ENCODE measurements at regions of chr21 and their contacts with region 1.

Region 1: DNA sequence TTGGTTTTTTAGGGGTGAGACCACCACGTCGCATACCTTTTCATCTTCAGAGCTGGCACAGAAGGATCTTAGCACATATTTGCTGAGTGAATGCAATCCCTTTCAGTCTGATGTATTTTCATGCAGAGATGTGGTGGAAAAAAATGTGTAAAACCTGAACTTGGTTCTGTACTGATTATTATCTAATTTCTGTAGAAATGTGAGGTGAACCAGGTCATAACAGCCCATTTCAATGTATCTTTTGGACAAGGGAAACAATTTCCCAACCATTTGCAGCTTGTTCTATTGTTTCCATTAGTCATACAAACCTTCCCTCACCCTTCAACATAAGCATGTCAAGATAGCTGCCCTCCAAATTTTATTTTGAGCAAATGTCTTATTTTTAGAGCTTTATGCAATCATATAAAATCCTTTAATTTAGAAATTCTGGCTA is 46.8 kb upstream of the RUNX1 start:
- DNase-seq: peak; percentile 20
- ATAC-seq: peak; percentile 25
- H3K4me3 Mint-ChIP-seq: no peak overlapping the region
- H3K27ac Mint-ChIP-seq: peak overlapping the region; percentile 86
- H3K4me1 Mint-ChIP-seq: peaks cover 50% of the 10 kb centered on the region
- H3K27me3 Mint-ChIP-seq: peaks cover 2% of the 10 kb centered on the region

Region 2: GRCh38 chr21:34946916-34947534 is 148.8 kb before region 1 on chr21:
- CTCF ChIA-PET with region 1: no interaction called
- POLR2A ChIA-PET with region 1: no interaction called
- intact Hi-C with region 1: loop called in 1 of 2 experiments (anchors 2 kb)
- DNase-seq: no peak
- ATAC-seq: peak; percentile 65
- H3K4me3 Mint-ChIP-seq: peak overlapping the region; percentile 13
- H3K27ac Mint-ChIP-seq: peak overlapping the region; percentile 95
- H3K4me1 Mint-ChIP-seq: peaks cover 92% of the 10 kb centered on the region
- H3K27me3 Mint-ChIP-seq: no peaks in the 10 kb centered on the region

Region 3: GRCh38 chr21:35026617-35027562 is 69.0 kb before region 1 on chr21:
- CTCF ChIA-PET with region 1: no interaction called
- POLR2A ChIA-PET with region 1: no interaction called
- intact Hi-C with region 1: loop called in 1 of 2 experiments (anchors 2 kb)
- DNase-seq: peak; percentile 92
- ATAC-seq: peak; percentile 68
- H3K4me3 Mint-ChIP-seq: peak overlapping the region; percentile 75
- H3K27ac Mint-ChIP-seq: peak overlapping the region; percentile 97
- H3K4me1 Mint-ChIP-seq: peaks cover 88% of the 10 kb centered on the region
- H3K27me3 Mint-ChIP-seq: no peaks in the 10 kb centered on the region

Region 4: GRCh38 chr21:35138665-35139381 is 42.9 kb after region 1 on chr21:
- CTCF ChIA-PET with region 1: no interaction called
- POLR2A ChIA-PET with region 1: interaction called, 10 read pairs
- intact Hi-C with region 1: loop called (anchors 1 kb)
- DNase-seq: peak; percentile 83
- ATAC-seq: peak; percentile 91
- H3K4me3 Mint-ChIP-seq: peak overlapping the region; percentile 65
- H3K27ac Mint-ChIP-seq: peak overlapping the region; percentile 93
- H3K4me1 Mint-ChIP-seq: peaks cover 38% of the 10 kb centered on the region
- H3K27me3 Mint-ChIP-seq: no peaks in the 10 kb centered on the region

Region 5: GRCh38 chr21:35189077-35189863 is 93.4 kb after region 1 on chr21:
- CTCF ChIA-PET with region 1: no interaction called
- POLR2A ChIA-PET with region 1: no interaction called
- intact Hi-C with region 1: no loop called
- DNase-seq: no peak
- ATAC-seq: no peak
- H3K4me3 Mint-ChIP-seq: no peak overlapping the region
- H3K27ac Mint-ChIP-seq: no peak overlapping the region
- H3K4me1 Mint-ChIP-seq: peaks cover 18% of the 10 kb centered on the region
- H3K27me3 Mint-ChIP-seq: peaks cover 3% of the 10 kb centered on the region

Region 6: DNA sequence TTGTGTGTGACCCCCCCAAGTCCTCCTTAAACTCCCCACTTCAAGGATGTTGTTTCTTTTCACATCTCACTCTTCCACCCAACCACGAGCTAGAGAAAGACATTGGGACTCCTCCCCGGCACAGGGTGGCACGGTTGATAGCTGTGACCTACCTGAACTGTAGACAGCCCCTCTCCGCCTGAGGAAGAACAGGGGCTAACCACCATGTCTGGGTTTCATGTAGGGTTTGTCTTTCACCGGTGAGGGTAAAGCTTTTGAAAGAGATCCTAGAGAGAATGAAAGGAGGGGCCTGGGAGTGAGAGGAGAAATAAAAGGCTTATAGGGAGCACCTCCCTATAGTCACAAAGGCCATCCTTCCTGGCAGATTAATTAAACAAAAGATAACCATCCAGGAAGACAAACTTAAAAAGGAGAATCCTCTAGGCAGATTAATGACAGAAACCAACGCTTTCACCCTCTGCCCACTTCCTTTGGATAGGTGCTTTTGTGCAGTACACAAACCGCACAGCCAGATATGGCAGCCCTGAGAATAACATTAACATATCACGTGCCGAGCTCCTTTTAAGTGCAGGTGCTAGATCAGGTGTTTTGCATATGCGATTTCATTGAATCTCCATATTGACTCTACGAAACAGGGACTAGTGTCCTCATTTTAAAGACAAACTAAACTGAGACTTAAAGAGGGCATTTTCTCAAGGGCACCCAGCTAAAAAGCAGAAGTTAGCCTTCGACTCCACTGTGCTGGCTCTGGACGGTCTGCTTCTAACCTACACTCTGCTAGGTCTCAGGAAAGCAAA is 131.3 kb after region 1 on chr21:
- CTCF ChIA-PET with region 1: interaction called, 3 read pairs
- POLR2A ChIA-PET with region 1: interaction called, 4 read pairs
- intact Hi-C with region 1: loop called in 1 of 2 experiments (anchors 2 kb)
- DNase-seq: peak; percentile 73
- ATAC-seq: peak; percentile 83
- H3K4me3 Mint-ChIP-seq: peak overlapping the region; percentile 45
- H3K27ac Mint-ChIP-seq: peak overlapping the region; percentile 85
- H3K4me1 Mint-ChIP-seq: peaks cover 37% of the 10 kb centered on the region
- H3K27me3 Mint-ChIP-seq: no peaks in the 10 kb centered on the region

Region 7: DNA sequence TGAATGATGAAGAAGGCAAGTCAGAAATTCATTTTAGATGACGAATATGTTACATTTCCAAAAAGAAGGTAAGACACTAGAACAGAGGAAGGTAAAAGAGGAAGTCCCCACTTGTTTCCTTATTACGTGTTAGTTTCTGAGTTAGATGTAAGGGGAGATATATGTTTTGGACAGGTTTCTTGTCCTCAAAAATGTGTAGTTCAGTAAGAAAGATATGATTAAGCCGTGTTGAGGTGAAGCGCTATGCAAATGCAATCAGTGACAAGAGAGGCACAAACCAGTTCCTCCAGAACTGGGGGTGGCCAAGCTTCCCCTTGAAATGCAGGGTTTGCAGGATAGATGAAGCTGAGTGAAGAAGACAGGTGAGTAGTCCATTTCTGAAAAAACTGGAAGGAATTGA is 246.6 kb after region 1 on chr21:
- CTCF ChIA-PET with region 1: interaction called, 3 read pairs
- POLR2A ChIA-PET with region 1: no interaction called
- intact Hi-C with region 1: loop called (anchors 1 kb)
- DNase-seq: peak; percentile 55
- ATAC-seq: peak; percentile 78
- H3K4me3 Mint-ChIP-seq: peak overlapping the region; percentile 59
- H3K27ac Mint-ChIP-seq: peak overlapping the region; percentile 94
- H3K4me1 Mint-ChIP-seq: peaks cover 39% of the 10 kb centered on the region
- H3K27me3 Mint-ChIP-seq: peaks cover 1% of the 10 kb centered on the region

Region 8: GRCh38 chr21:35358008-35358407 is 262.1 kb after region 1 on chr21:
- CTCF ChIA-PET with region 1: no interaction called
- POLR2A ChIA-PET with region 1: no interaction called
- intact Hi-C with region 1: loop called in 1 of 2 experiments (anchors 5 kb)
- DNase-seq: no peak
- ATAC-seq: peak; percentile 86
- H3K4me3 Mint-ChIP-seq: no peak overlapping the region
- H3K27ac Mint-ChIP-seq: peak overlapping the region; percentile 74
- H3K4me1 Mint-ChIP-seq: peaks cover 15% of the 10 kb centered on the region
- H3K27me3 Mint-ChIP-seq: no peaks in the 10 kb centered on the region

Measured in activated CD4-positive, alpha-beta T cell treated with anti-CD3 and anti-CD28 coated beads for 36 hours (primary cell).